Head of caudate nucleus (tissue), 42 donors: ENCODE measurements at regions of chr18 and their contacts with region 1.

Region 1: GRCh38 chr18:25351777-25352628 is at the start of gene ZNF521:
- DNase-seq: peak; percentile 76 to 94 (median 87)

Region 2: GRCh38 chr18:24878289-24878688 is 473.7 kb before region 1 on chr18:
- intact Hi-C with region 1: loop called (anchors 5 kb)
- DNase-seq: peak in 16 of 42 donors; percentile 14 to 78 (median 45)

Region 3: GRCh38 chr18:25230658-25231326 is 121.2 kb before region 1 on chr18:
- intact Hi-C with region 1: loop called (anchors 5 kb)
- DNase-seq: peak; percentile 60 to 93 (median 84)